B cell (primary cell): ENCODE measurements at regions of chr5 and their contacts with region 1.

Region 1: GRCh38 chr5:150644514-150644913 is 4.1 kb downstream of the SYNPO start:
- DNase-seq: no peak
- ATAC-seq: no peak
- H3K4me3 ChIP-seq: no peak overlapping the region
- H3K4me3 Mint-ChIP-seq: no peak overlapping the region
- H3K27ac ChIP-seq: no peak overlapping the region
- H3K27ac Mint-ChIP-seq: no peak overlapping the region
- H3K4me1 ChIP-seq: no peaks in the 10 kb centered on the region
- H3K4me1 Mint-ChIP-seq: no peaks in the 10 kb centered on the region
- H3K27me3 ChIP-seq: no peaks in the 10 kb centered on the region
- H3K27me3 Mint-ChIP-seq: no peaks in the 10 kb centered on the region
- CTCF ChIP-seq: no peak

Region 2: GRCh38 chr5:150612405-150612804 is 32.1 kb before region 1 on chr5:
- CTCF ChIA-PET with region 1: interaction called, 4 read pairs
- POLR2A ChIA-PET with region 1: interaction called, 13 read pairs
- intact Hi-C with region 1: no loop called
- DNase-seq: no peak
- ATAC-seq: no peak
- H3K4me3 ChIP-seq: no peak overlapping the region
- H3K4me3 Mint-ChIP-seq: no peak overlapping the region
- H3K27ac ChIP-seq: no peak overlapping the region
- H3K27ac Mint-ChIP-seq: no peak overlapping the region
- H3K4me1 ChIP-seq: no peaks in the 10 kb centered on the region
- H3K4me1 Mint-ChIP-seq: peaks cover 2% of the 10 kb centered on the region
- H3K27me3 ChIP-seq: no peaks in the 10 kb centered on the region
- H3K27me3 Mint-ChIP-seq: peaks cover 12% of the 10 kb centered on the region
- CTCF ChIP-seq: no peak

Region 3: GRCh38 chr5:150672237-150672883 is 27.8 kb after region 1 on chr5:
- CTCF ChIA-PET with region 1: no interaction called
- POLR2A ChIA-PET with region 1: no interaction called
- intact Hi-C with region 1: no loop called
- DNase-seq: peak; percentile 32
- ATAC-seq: peak; percentile 36
- H3K4me3 ChIP-seq: peak overlapping the region in 4 of 5 experiments; percentile 29 to 55 (median 50)
- H3K4me3 Mint-ChIP-seq: peak overlapping the region; percentile 82
- H3K27ac ChIP-seq: no peak overlapping the region
- H3K27ac Mint-ChIP-seq: no peak overlapping the region
- H3K4me1 ChIP-seq: peaks cover 14 to 19% of the 10 kb centered on the region in 2 donors
- H3K4me1 Mint-ChIP-seq: peaks cover 15% of the 10 kb centered on the region
- H3K27me3 ChIP-seq: peaks cover 0 to 46% (median 23%) of the 10 kb centered on the region in 4 experiments
- H3K27me3 Mint-ChIP-seq: peaks cover 25% of the 10 kb centered on the region
- CTCF ChIP-seq: no peak

Region 4: GRCh38 chr5:150809363-150809762 is 164.8 kb after region 1 on chr5:
- CTCF ChIA-PET with region 1: no interaction called
- POLR2A ChIA-PET with region 1: no interaction called
- intact Hi-C with region 1: no loop called
- DNase-seq: no peak
- ATAC-seq: no peak
- H3K4me3 ChIP-seq: no peak overlapping the region
- H3K4me3 Mint-ChIP-seq: no peak overlapping the region
- H3K27ac ChIP-seq: no peak overlapping the region
- H3K27ac Mint-ChIP-seq: no peak overlapping the region
- H3K4me1 ChIP-seq: no peaks in the 10 kb centered on the region
- H3K4me1 Mint-ChIP-seq: no peaks in the 10 kb centered on the region
- H3K27me3 ChIP-seq: peaks cover 0 to 2% (median under 1%) of the 10 kb centered on the region in 4 experiments
- H3K27me3 Mint-ChIP-seq: peaks cover 21% of the 10 kb centered on the region
- CTCF ChIP-seq: no peak

Region 5: DNA sequence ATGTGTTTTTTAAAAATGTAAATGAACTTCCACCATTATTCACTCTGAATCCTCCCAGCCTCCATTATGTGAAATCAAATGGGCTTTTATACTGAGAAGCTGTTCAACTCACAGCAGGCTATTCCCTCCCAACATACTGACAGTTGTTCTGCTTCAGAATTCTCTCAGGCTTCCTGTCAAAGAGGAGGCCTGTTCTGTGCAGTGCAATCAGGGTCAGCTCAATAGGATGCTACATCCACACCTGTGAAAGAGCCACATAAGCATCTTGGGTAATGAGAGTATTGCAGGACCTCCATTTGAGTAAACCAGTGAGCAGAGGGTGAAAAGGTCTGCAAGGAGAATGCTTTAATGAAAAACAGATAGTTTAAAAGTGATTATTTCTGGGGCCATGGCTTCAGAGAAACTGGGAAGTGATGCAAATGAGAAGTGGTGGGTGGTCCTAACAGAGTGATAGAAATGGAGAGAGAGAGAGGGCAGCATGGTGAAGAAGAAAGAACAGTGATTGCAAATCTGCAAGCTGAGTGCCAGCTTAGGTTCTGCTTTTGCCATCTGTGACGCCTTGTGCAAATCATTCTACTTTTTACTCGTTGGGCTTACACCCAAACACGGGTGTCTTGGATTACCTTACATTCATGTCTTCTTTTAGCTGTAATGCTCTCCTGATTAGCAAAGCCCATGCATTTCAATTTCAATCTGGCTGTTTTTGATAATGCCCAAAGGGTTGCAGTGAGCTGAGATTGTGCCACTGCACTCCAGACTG is 1963.1 kb after region 1 on chr5:
- CTCF ChIA-PET with region 1: no interaction called
- POLR2A ChIA-PET with region 1: no interaction called
- intact Hi-C with region 1: no loop called
- DNase-seq: no peak
- ATAC-seq: no peak
- H3K4me3 ChIP-seq: no peak overlapping the region
- H3K4me3 Mint-ChIP-seq: no peak overlapping the region
- H3K27ac ChIP-seq: no peak overlapping the region
- H3K27ac Mint-ChIP-seq: no peak overlapping the region
- H3K4me1 ChIP-seq: no peaks in the 10 kb centered on the region
- H3K4me1 Mint-ChIP-seq: no peaks in the 10 kb centered on the region
- H3K27me3 ChIP-seq: no peaks in the 10 kb centered on the region
- H3K27me3 Mint-ChIP-seq: no peaks in the 10 kb centered on the region
- CTCF ChIP-seq: no peak